ENCODE measurements at regions of chr6 and their contacts with region 1.

Region 1: GRCh38 chr6:30717042-30717844 is at the start of gene MDC1:
- DNase-seq: peak; percentile 91 to 100 (median 98)
- ATAC-seq: peak; percentile 75 to 80
- H3K4me3 Mint-ChIP-seq: peak within 1 kb of the TSS; percentile 87 to 99 (median 97)
- H3K27ac Mint-ChIP-seq: peak within 1 kb of the TSS; percentile 97 to 100 (median 99)
- H3K4me1 Mint-ChIP-seq: peaks cover 34 to 59% (median 57%) of the 10 kb centered on the region in 4 donors
- H3K27me3 Mint-ChIP-seq: no peaks in the 10 kb centered on the region
- polyA plus RNA-seq, gene MDC1: 1.3 to 6.3 (median 2.8) TPM

Region 2: GRCh38 chr6:30672445-30673253 is 44.6 kb before region 1 on chr6 and contains the start of gene DHX16:
- POLR2A ChIA-PET with region 1: interaction called, 594 read pairs
- DNase-seq: peak; percentile 76 to 94 (median 86)
- ATAC-seq: peak; percentile 80 to 85
- H3K4me3 Mint-ChIP-seq: peak within 1 kb of the TSS; percentile 76 to 95 (median 90)
- H3K27ac Mint-ChIP-seq: peak within 1 kb of the TSS; percentile 74 to 96 (median 90)
- H3K4me1 Mint-ChIP-seq: peaks cover 23 to 46% (median 41%) of the 10 kb centered on the region in 4 donors
- H3K27me3 Mint-ChIP-seq: no peaks in the 10 kb centered on the region
- polyA plus RNA-seq, gene DHX16: 17.7 to 31.2 (median 18.7) TPM

Region 3: DNA sequence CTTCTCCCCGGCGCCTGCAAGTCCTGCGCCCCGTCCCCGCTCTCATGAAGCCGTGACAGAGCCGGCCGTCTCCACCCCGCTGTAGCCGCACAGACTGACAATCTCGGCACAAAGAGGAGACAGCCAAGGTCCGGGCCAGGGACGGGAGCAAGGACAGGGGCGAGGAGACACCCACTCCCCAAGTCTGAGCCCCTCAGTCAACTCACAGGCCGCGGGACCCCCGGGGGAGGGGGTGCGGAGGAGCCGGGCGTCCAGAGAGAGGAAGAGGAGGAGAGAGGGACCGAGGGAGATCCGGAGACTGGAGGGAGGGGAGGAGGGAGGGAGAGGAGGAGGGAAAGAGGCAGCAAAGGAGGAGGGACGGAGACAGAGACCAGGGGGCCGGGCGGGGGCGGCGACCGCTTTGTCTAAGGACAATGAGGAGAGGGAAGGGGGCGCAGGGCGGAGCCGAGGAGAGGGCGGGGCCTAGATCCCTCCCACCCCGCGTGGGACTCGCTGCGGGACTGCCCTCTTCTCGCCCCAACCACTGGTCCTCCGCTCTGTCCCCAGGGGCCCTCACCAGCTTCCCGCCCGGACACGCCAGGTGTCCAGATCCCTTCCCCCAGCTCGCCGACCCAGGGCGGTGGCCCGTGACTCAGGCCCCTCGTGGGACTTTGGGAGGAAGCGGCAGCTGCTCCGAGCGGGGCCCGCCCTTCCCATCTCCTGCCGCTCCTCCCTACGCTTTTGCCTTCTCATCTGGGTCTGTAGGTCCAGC is 30.2 kb before region 1 on chr6:
- POLR2A ChIA-PET with region 1: interaction called, 594 read pairs
- DNase-seq: peak; percentile 27 to 82 (median 57)
- ATAC-seq: peak; percentile 22 to 34
- H3K4me3 Mint-ChIP-seq: peak overlapping the region; percentile 94 to 100 (median 99)
- H3K27ac Mint-ChIP-seq: peak overlapping the region; percentile 81 to 99 (median 97)
- H3K4me1 Mint-ChIP-seq: peaks cover 43 to 60% (median 45%) of the 10 kb centered on the region in 4 donors
- H3K27me3 Mint-ChIP-seq: no peaks in the 10 kb centered on the region

Region 4: DNA sequence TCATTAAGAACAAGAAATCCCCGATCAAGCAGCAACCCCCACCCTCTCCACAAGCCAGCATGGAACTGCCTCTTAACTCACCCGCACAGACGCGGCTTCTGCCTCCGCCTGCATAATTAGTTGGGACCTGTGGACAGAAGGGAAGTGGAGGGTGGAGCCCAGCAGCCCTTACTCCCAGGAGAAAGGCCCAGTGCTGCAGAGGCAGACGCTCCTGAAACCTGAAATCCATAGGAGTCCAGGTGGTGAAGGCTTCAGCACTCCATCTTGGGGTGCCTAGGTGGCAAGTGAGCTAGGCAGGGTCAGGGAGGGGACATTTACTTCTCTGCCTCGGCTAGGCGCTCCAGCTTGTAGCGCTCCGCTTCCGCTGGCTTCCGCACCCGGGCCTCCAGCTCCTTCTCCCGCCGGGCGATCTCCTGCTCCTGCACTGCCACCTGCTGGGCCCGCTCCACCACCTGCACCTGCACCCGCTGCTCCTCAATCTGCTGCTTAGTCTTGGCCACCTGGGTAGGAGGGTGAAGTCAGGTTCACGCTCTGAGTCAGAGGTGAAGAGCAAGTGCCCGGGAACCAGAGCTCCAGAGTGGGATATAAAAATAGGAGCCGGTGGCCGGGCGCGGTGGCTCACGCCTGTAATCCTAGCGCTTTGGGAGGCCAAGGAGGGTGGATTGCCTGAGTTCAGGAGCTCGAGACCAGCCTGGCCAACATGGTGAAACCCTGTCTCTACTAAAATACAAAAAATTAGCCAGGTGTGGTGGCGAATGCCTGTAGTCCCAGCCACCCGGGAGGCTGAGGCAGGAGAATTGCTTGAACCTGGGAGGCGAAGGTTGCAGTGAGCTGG is 13.6 kb after region 1 on chr6:
- POLR2A ChIA-PET with region 1: interaction called, 24 read pairs
- DNase-seq: peak; percentile 66 to 90 (median 80)
- ATAC-seq: peak; percentile 98 to 99
- H3K4me3 Mint-ChIP-seq: peak overlapping the region; percentile 14 to 77 (median 51)
- H3K27ac Mint-ChIP-seq: peak overlapping the region; percentile 47 to 81 (median 70)
- H3K4me1 Mint-ChIP-seq: peaks cover 21 to 47% (median 31%) of the 10 kb centered on the region in 4 donors
- H3K27me3 Mint-ChIP-seq: no peaks in the 10 kb centered on the region